Activated CD4-positive, alpha-beta T cell treated with anti-CD3 and anti-CD28 coated beads for 36 hours (primary cell): ENCODE measurements at regions of chr10 and their contacts with region 1.

Region 1: GRCh38 chr10:63318491-63318890 is 147.3 kb downstream of the JMJD1C start:
- DNase-seq: no peak
- ATAC-seq: no peak
- H3K4me3 Mint-ChIP-seq: no peak overlapping the region
- H3K27ac Mint-ChIP-seq: no peak overlapping the region
- H3K4me1 Mint-ChIP-seq: no peaks in the 10 kb centered on the region
- H3K27me3 Mint-ChIP-seq: no peaks in the 10 kb centered on the region

Region 2: DNA sequence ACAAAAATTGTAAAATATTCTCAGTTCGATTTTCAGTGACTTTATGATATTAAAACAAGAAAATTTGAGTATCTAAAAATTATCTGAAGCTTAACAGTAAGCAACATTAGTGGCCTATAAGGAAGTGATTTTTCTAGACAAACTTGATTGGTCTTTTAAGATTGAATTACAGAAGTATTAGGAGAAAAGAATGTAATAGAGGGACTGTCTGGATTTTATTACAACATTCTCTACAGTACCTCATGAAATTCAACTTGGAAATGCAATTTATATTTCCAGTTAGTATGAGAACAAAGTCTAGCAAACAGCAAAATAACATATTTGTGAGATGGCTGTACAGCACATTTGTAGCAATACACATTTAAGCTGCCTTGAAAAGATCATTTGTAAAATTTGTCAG is 221.5 kb after region 1 on chr10:
- CTCF ChIA-PET with region 1: no interaction called
- POLR2A ChIA-PET with region 1: interaction called, 14 read pairs
- intact Hi-C with region 1: no loop called
- DNase-seq: no peak
- ATAC-seq: no peak
- H3K4me3 Mint-ChIP-seq: no peak overlapping the region
- H3K27ac Mint-ChIP-seq: no peak overlapping the region
- H3K4me1 Mint-ChIP-seq: peaks cover 9% of the 10 kb centered on the region
- H3K27me3 Mint-ChIP-seq: no peaks in the 10 kb centered on the region

Region 3: GRCh38 chr10:64091897-64092296 is 773.4 kb after region 1 on chr10:
- CTCF ChIA-PET with region 1: no interaction called
- POLR2A ChIA-PET with region 1: no interaction called
- intact Hi-C with region 1: no loop called
- DNase-seq: no peak
- ATAC-seq: no peak
- H3K4me3 Mint-ChIP-seq: no peak overlapping the region
- H3K27ac Mint-ChIP-seq: no peak overlapping the region
- H3K4me1 Mint-ChIP-seq: no peaks in the 10 kb centered on the region
- H3K27me3 Mint-ChIP-seq: no peaks in the 10 kb centered on the region